WTC11 (cell line): ENCODE measurements at regions of chr17 and their contacts with region 1.

Region 1: GRCh38 chr17:68533887-68534694 is 21.9 kb downstream of the PRKAR1A start:
- DNase-seq: no peak
- ATAC-seq: no peak
- H3K4me3 Mint-ChIP-seq: no peak overlapping the region
- H3K27ac Mint-ChIP-seq: peak overlapping the region; percentile 76
- H3K4me1 Mint-ChIP-seq: no peaks in the 10 kb centered on the region
- H3K27me3 Mint-ChIP-seq: no peaks in the 10 kb centered on the region
- CTCF ChIP-seq: no peak

Region 2: DNA sequence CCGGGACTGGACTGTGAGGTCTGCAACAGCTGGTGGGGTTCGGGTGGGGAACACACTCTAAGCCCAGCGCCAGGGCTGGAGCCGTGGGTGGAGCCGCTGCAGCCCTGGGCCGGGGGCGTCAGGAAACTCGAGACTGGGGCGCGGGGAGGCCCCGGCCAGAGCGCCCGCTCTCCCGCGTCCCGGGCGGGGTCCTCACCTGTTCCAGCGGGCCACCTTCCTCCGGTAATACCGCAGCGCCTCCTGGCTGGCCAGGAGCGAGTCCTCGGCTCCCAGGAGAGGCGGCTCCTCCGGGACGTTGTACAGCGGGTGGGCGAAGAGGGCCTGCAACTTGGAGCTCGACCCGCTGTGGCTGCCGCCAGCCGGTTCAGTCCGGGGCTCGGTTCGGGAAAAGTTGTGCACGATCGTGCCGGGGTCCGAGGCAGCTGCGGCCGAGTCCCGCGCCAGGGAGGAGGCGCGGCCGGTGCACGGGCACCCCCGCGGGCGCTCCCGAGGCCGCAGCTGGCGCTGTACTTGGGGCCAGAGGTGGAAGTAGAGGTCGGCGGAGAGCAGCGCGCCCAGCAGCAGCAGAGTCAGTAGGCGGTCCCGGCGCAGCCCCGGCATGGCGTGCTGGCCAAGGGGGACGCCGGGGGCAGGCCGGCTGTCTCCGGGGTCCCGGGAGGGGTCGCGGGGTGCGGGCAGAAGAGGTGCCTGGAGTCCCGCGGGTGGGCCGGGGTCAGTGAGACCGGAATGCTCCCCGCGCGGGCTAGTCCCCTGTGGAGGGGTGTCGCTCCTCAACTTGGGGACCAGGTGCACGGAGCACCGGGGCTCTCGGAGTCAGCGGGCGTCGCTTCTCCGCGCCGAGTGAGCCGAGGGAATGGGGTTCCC is 66.2 kb after region 1 on chr17:
- CTCF ChIA-PET with region 1: interaction called, 21 read pairs
- POLR2A ChIA-PET with region 1: no interaction called
- DNase-seq: peak; percentile 81
- ATAC-seq: peak; percentile 77
- H3K4me3 Mint-ChIP-seq: peak overlapping the region; percentile 87
- H3K27ac Mint-ChIP-seq: no peak overlapping the region
- H3K4me1 Mint-ChIP-seq: peaks cover 41% of the 10 kb centered on the region
- H3K27me3 Mint-ChIP-seq: peaks cover 47% of the 10 kb centered on the region
- CTCF ChIP-seq: no peak

Region 3: GRCh38 chr17:68759343-68760132 is 225.4 kb after region 1 on chr17:
- CTCF ChIA-PET with region 1: interaction called, 17 read pairs
- POLR2A ChIA-PET with region 1: no interaction called
- DNase-seq: peak; percentile 84
- ATAC-seq: peak; percentile 96
- H3K4me3 Mint-ChIP-seq: peak overlapping the region; percentile 51
- H3K27ac Mint-ChIP-seq: peak overlapping the region; percentile 82
- H3K4me1 Mint-ChIP-seq: peaks cover 13% of the 10 kb centered on the region
- H3K27me3 Mint-ChIP-seq: peaks cover 2% of the 10 kb centered on the region; the same call in 1 of the 2 replicates
- CTCF ChIP-seq: peak; percentile 69